CD4-positive, alpha-beta memory T cell (primary cell): ENCODE measurements at regions of chr6 and their contacts with region 1.

Region 1: GRCh38 chr6:138001750-138002349 is 105.4 kb downstream of the PERP start:
- DNase-seq: peak; percentile 53 to 63 (median 55)
- H3K4me3 ChIP-seq: no peak overlapping the region
- H3K4me3 Mint-ChIP-seq: no peak overlapping the region
- H3K27ac ChIP-seq: no peak overlapping the region
- H3K27ac Mint-ChIP-seq: no peak overlapping the region
- H3K4me1 ChIP-seq: no peaks in the 10 kb centered on the region
- H3K4me1 Mint-ChIP-seq: peaks cover 0 to 3% (median 0%) of the 10 kb centered on the region in 4 donors
- H3K27me3 ChIP-seq: no peaks in the 10 kb centered on the region
- H3K27me3 Mint-ChIP-seq: peaks cover 0 to 9% of the 10 kb centered on the region in 2 donors

Region 2: DNA sequence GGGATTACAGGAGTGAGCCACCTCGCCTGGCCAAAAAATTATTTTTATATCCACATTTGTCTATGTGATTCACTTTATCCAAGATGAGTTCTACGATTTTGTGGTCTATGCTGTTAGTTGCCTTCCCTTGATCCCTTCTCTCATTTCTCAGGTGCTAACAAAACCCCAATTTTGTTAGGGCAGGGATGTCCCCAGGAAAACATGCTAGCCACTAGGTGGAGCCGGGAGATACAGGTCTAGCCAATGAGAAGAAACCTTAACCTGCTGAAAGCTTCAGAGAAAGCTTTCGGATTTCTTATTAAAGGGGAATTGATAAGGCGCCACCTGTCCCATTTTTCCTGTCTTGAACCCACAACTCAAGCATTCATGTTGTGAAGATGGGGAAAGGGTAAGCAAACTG is 340.2 kb before region 1 on chr6:
- CTCF ChIA-PET with region 1: interaction called, 13 read pairs
- POLR2A ChIA-PET with region 1: no interaction called
- intact Hi-C with region 1: no loop called
- DNase-seq: peak in 3 of 5 donors; percentile 40 to 45 (median 45)
- H3K4me3 ChIP-seq: no peak overlapping the region
- H3K4me3 Mint-ChIP-seq: no peak overlapping the region
- H3K27ac ChIP-seq: no peak overlapping the region
- H3K27ac Mint-ChIP-seq: peak overlapping the region in 1 of 7 donors; percentile 51
- H3K4me1 ChIP-seq: no peaks in the 10 kb centered on the region
- H3K4me1 Mint-ChIP-seq: peaks cover 0 to 3% (median under 1%) of the 10 kb centered on the region in 4 donors
- H3K27me3 ChIP-seq: no peaks in the 10 kb centered on the region
- H3K27me3 Mint-ChIP-seq: peaks cover 0 to 4% of the 10 kb centered on the region in 2 donors

Region 3: GRCh38 chr6:137944793-137945498 is 56.9 kb before region 1 on chr6:
- CTCF ChIA-PET with region 1: interaction called, 17 read pairs
- POLR2A ChIA-PET with region 1: no interaction called
- intact Hi-C with region 1: no loop called
- DNase-seq: peak in 4 of 5 donors; percentile 41 to 56 (median 48)
- H3K4me3 ChIP-seq: no peak overlapping the region
- H3K4me3 Mint-ChIP-seq: peak overlapping the region in 1 of 8 donors; percentile 12
- H3K27ac ChIP-seq: no peak overlapping the region
- H3K27ac Mint-ChIP-seq: peak overlapping the region in 5 of 7 donors; percentile 10 to 67 (median 63)
- H3K4me1 ChIP-seq: peaks cover 16% of the 10 kb centered on the region
- H3K4me1 Mint-ChIP-seq: peaks cover 13 to 22% (median 19%) of the 10 kb centered on the region in 4 donors
- H3K27me3 ChIP-seq: no peaks in the 10 kb centered on the region
- H3K27me3 Mint-ChIP-seq: no peaks in the 10 kb centered on the region

Region 4: GRCh38 chr6:138109042-138109997 is 107.5 kb after region 1 on chr6:
- CTCF ChIA-PET with region 1: interaction called, 139 read pairs
- POLR2A ChIA-PET with region 1: interaction called, 4 read pairs
- intact Hi-C with region 1: loop called (anchors 1 kb)
- DNase-seq: peak; percentile 69 to 75 (median 75)
- H3K4me3 ChIP-seq: no peak overlapping the region
- H3K4me3 Mint-ChIP-seq: peak overlapping the region in 2 of 8 donors; percentile 52 to 55
- H3K27ac ChIP-seq: no peak overlapping the region
- H3K27ac Mint-ChIP-seq: peak overlapping the region in 3 of 7 donors; percentile 8 to 65 (median 11)
- H3K4me1 ChIP-seq: peaks cover 25% of the 10 kb centered on the region
- H3K4me1 Mint-ChIP-seq: peaks cover 16 to 37% (median 17%) of the 10 kb centered on the region in 4 donors
- H3K27me3 ChIP-seq: no peaks in the 10 kb centered on the region
- H3K27me3 Mint-ChIP-seq: peaks cover 3% of the 10 kb centered on the region in 2 donors

Region 5: GRCh38 chr6:138287144-138287955 is 285.5 kb after region 1 on chr6:
- CTCF ChIA-PET with region 1: interaction called, 9 read pairs
- POLR2A ChIA-PET with region 1: no interaction called
- intact Hi-C with region 1: loop called (anchors 1 kb)
- DNase-seq: peak; percentile 26 to 53 (median 39)
- H3K4me3 ChIP-seq: no peak overlapping the region
- H3K4me3 Mint-ChIP-seq: peak overlapping the region in 1 of 8 donors; percentile 48
- H3K27ac ChIP-seq: no peak overlapping the region
- H3K27ac Mint-ChIP-seq: peak overlapping the region in 1 of 7 donors; percentile 31
- H3K4me1 ChIP-seq: no peaks in the 10 kb centered on the region
- H3K4me1 Mint-ChIP-seq: peaks cover 0 to 1% (median 0%) of the 10 kb centered on the region in 4 donors
- H3K27me3 ChIP-seq: no peaks in the 10 kb centered on the region
- H3K27me3 Mint-ChIP-seq: peaks cover 0 to 3% of the 10 kb centered on the region in 2 donors

Region 6: DNA sequence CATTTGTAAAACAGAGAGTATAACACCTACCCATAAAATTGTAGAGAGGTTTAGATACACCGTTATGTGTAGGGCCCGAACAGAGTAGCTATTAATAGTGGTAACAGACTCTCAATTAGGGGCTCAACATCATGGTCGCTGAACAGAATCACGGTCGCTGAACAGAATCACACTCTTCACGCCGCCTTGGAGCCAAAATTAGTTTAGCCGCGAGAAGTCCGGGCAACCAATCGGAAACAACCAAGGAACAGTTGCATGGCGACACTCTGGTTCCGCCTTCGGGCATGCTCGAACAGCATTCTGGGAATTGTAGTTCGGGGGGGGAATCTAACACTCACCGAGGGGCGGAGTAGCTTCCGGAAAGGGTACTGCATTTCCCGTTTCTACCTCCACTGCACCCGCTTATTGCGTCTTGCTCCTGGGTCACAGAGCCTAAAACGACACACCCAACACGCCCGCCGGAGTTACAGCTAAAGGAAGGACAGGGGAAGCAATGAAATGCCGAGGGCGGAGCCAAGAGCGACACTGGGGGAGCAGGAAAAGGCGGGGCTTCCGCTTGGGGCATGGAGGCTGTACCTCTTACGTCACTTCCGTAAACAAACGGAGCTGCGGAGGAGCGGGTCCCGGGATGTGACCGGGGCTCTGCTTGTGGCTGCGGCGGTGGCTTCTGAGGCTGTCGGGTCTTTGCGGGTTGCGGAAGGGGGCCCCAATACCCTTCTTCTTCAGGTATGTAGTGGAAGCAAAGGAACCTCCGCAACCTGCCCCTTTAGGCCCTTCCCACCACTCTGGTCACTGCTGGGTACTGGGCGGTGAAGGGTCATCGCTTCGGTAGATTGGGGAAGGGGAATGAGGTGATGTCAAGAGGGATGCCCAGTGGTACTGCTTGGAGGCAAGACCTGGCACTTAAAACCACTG is 771.6 kb after region 1 on chr6 and contains the start of gene CCDC28A:
- CTCF ChIA-PET with region 1: no interaction called
- POLR2A ChIA-PET with region 1: no interaction called
- intact Hi-C with region 1: loop called (anchors 10 kb)
- DNase-seq: peak; percentile 96 to 98 (median 97)
- H3K4me3 ChIP-seq: peak within 1 kb of the TSS; percentile 72 to 99
- H3K4me3 Mint-ChIP-seq: peak within 1 kb of the TSS; percentile 91 to 100 (median 99)
- H3K27ac ChIP-seq: peak within 1 kb of the TSS; percentile 90
- H3K27ac Mint-ChIP-seq: peak within 1 kb of the TSS; percentile 97 to 100 (median 100)
- H3K4me1 ChIP-seq: peaks cover 18% of the 10 kb centered on the region
- H3K4me1 Mint-ChIP-seq: peaks cover 12 to 46% (median 26%) of the 10 kb centered on the region in 4 donors
- H3K27me3 ChIP-seq: no peaks in the 10 kb centered on the region
- H3K27me3 Mint-ChIP-seq: peaks cover 0 to 3% of the 10 kb centered on the region in 2 donors
- total RNA-seq, gene CCDC28A: 32.4 to 33.9 TPM